Posterior cingulate gyrus (tissue), 11 donors: ENCODE measurements at regions of chr10 and their contacts with region 1.

Region 1: DNA sequence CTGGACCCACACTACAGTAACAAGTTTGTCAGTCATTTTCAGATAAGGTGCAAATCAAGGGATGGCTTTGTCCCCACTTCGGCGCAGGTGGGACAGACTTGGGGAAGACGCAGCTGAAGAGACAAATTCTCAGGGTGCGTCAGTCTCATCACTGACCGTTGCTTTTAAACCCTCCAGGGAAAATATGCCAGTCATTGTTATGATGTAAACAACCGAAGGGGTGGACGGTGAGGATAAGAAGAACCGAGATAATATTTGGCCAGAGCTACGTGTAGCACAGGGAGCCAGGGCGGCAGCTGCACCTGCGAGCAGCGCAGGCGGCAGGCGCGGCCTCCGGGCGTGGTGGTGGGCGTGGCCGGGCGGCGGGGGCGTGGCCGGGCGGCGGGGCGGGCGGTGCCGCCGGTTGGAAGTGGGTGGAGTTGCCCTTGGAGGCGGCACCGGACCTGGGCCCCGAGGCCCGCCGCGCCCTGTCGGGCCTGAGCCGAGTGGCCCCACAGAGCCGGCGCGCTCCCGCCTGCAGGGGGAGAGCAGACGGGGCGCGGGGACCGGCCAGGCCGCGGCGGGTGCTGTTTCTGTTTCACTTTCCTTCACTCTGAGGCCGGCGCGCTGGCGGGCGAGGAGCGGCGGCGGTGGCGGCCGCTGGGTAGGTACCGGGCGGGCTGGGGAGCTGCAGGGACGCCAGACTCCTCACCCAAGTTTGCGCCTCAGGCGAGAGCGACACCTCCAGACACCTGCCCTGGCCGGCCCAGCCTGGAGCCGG is at the start of gene PCGF5:
- DNase-seq: peak; percentile 72 to 98 (median 84)

Region 2: DNA sequence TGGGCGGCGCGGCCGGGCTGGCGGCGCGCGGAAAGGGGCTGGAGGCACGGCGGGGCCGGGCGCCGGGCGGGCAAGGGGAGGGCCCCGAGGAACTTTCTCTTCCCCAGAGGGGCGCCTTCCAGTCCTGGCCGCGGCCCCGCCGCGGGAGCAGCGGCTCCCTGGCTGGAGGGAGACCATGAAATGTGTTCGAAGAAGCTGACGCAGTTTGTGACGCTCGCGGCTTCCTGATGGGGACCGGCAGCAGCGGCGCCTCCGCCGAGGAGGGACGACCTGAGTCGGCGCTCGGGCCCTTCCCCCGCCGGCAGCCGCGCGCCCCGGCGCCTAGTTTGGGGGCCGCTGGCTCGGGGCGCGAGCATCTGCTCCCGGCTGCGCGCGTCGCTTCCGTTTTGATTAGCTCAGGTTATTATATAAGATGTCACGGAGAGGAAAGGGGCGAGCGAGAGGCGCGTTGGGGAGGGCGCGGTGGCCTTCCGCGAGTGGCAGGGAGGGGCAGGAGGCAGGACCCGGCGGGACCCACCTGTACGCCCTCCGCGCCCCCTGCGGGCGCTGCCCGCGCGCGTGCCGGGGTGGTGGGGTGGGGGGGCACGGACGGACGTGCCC is 57.0 kb before region 1 on chr10:
- intact Hi-C with region 1: loop called (anchors 2 kb)
- DNase-seq: peak; percentile 37 to 94 (median 60)

Region 3: DNA sequence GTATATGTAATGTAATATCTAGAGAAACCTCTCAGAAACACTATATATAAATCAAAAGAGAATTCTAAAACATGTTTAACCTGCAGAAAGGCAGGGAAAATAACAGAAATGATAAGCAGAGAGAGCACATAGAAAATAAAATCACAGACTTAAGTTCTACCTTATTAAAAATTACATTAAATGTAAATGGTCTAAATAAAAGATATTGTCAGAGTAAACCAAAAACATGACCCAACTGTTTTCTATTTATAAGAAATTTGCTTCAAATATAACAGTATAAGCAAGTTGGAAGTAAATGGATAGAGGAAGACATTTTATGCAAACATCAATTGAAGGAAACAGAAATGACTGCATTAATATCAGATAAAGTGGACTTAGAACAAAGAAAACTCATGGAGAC is 233.2 kb after region 1 on chr10:
- intact Hi-C with region 1: no loop called
- DNase-seq: no peak